Left ventricle myocardium inferior (tissue), 1 donor: ENCODE measurements at regions of chr3 and their contacts with region 1.

Region 1: GRCh38 chr3:84245789-84246188 is 713.0 kb upstream of the CADM2 start:
- DNase-seq: no peak
- H3K4me3 ChIP-seq: no peak overlapping the region
- H3K27ac ChIP-seq: no peak overlapping the region
- H3K4me1 ChIP-seq: no peaks in the 10 kb centered on the region
- H3K27me3 ChIP-seq: no peaks in the 10 kb centered on the region
- CTCF ChIP-seq: no peak

Region 2: DNA sequence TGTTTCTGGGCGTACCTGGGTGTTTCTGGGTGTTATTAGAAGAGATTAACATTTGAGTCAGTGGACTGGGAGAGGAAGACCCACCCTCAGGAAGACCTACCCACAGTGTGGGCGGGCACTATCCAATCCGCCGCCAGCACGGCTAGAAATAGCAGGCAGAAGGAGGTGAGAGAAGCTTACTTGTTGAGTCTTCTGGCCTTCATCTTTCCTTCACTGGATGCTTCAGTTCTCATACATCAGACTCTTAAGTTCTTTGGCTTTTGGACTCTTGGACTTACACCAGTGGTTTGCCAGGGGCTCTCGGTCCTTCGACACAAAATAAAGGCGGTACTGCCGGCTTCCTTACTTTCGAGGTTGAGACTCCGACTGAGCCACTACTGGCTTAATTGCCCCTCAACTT is 58.4 kb after region 1 on chr3:
- intact Hi-C with region 1: loop called (anchors 10 kb)
- DNase-seq: no peak
- H3K4me3 ChIP-seq: no peak overlapping the region
- H3K27ac ChIP-seq: no peak overlapping the region
- H3K4me1 ChIP-seq: no peaks in the 10 kb centered on the region
- H3K27me3 ChIP-seq: no peaks in the 10 kb centered on the region
- CTCF ChIP-seq: no peak